Caco-2 (cell line): ENCODE measurements at regions of chrX and their contacts with region 1.

Region 1: DNA sequence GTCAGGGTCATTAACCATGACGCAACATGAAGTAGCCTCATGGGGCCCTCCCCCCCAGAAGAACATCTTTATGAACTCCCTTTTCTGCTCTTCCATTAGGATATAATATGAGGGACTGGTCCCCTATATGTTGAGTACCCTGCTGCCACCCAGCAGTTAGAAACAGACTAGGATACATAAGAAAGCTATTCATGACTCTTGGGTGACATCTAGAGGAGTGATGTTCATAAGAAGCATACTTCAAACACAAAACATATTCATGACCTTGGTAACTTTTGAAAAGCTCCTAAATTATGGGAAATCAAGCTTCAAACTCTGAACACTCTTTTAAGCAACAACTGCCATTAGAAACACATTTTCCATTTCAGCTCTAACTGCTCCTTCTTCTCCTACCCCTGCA is 155.2 kb upstream of the SPIN4 start:
- DNase-seq: peak in 1 of 2 experiments; percentile 24
- H3K4me3 ChIP-seq: no peak overlapping the region
- H3K4me3 Mint-ChIP-seq: no peak overlapping the region
- H3K27ac Mint-ChIP-seq: no peak overlapping the region
- H3K4me1 ChIP-seq: peaks cover 6% of the 10 kb centered on the region; the same call in 1 of the 2 replicates
- H3K4me1 Mint-ChIP-seq: peaks cover 7% of the 10 kb centered on the region
- H3K27me3 ChIP-seq: no peaks in the 10 kb centered on the region
- H3K27me3 Mint-ChIP-seq: no peaks in the 10 kb centered on the region
- CTCF ChIP-seq: peak; percentile 18 to 32

Region 2: DNA sequence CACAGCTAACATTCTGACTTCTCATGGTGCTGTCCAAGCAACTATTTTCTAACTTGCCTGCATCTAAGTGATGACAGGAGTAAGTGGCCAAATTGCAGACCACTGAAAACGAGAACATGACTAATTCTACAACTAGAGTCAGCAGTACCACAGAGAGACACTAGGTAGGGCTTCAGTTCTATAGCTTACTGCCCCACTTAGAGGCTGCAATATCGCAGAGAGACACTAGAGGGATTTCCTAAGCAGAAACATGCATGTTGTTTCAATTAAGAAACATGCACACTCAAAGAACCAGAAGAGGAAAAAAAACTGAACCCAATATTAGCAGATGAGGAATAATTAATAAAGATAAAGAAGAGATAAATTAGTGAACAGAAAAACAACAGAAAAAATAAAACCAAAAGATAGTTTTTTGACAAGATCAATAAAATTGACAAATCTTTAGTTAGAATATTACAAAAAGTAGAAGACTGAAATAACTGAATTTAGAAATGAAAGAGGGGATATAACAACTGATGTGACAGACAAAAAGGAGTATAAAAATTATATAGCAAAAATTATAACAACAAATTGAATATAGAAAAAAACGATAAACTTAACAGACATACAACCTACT is 256.0 kb before region 1 on chrX:
- CTCF ChIA-PET with region 1: interaction called, 12 read pairs
- POLR2A ChIA-PET with region 1: no interaction called
- intact Hi-C with region 1: no loop called
- DNase-seq: peak; percentile 57 to 69
- H3K4me3 ChIP-seq: no peak overlapping the region
- H3K4me3 Mint-ChIP-seq: no peak overlapping the region
- H3K27ac Mint-ChIP-seq: no peak overlapping the region
- H3K4me1 ChIP-seq: no peaks in the 10 kb centered on the region
- H3K4me1 Mint-ChIP-seq: no peaks in the 10 kb centered on the region
- H3K27me3 ChIP-seq: no peaks in the 10 kb centered on the region
- H3K27me3 Mint-ChIP-seq: no peaks in the 10 kb centered on the region
- CTCF ChIP-seq: peak; percentile 70 to 90

Region 3: GRCh38 chrX:63275127-63275526 is 231.2 kb before region 1 on chrX:
- CTCF ChIA-PET with region 1: no interaction called
- POLR2A ChIA-PET with region 1: no interaction called
- intact Hi-C with region 1: loop called (anchors 1 kb)
- DNase-seq: peak; percentile 28 to 49
- H3K4me3 ChIP-seq: no peak overlapping the region
- H3K4me3 Mint-ChIP-seq: no peak overlapping the region
- H3K27ac Mint-ChIP-seq: no peak overlapping the region
- H3K4me1 ChIP-seq: no peaks in the 10 kb centered on the region
- H3K4me1 Mint-ChIP-seq: no peaks in the 10 kb centered on the region
- H3K27me3 ChIP-seq: no peaks in the 10 kb centered on the region
- H3K27me3 Mint-ChIP-seq: no peaks in the 10 kb centered on the region
- CTCF ChIP-seq: peak; percentile 39 to 50

Region 4: DNA sequence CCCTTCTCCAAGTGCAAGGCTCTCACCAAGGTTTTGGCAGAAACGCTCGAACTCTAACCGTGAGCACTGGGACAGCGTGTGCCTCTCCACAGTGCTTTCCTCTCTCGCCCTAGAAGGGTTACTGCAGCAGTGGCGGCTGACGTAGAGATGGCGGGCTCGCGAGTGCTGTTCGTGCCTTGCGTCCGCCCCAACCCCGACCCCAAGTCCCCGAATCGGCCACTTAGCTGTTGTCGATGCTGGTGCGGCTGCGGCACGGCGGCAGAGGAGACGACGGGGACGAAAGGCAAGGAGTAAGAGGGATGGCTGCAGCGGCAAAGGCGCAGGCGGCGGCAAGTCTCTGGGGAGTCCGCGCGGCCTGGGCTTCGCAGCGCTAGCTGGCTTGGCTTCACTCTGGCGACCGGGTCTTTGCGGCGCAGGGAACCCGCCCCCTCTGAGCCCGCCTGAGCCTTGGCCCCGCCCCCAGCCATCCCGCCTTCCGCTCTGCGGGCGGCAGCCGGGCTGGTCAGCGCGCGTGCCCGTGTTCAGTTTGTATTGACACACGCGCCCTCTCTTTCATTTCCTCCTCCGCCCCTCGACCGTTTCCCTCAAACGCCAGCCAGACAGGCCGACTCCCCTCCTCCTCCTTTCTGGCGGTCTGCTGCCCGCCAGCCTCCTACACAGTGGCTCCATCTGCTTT is 155.2 kb before region 1 on chrX and contains the start of gene SPIN4:
- CTCF ChIA-PET with region 1: no interaction called
- POLR2A ChIA-PET with region 1: no interaction called
- intact Hi-C with region 1: loop called (anchors 2 kb)
- DNase-seq: peak; percentile 89
- H3K4me3 ChIP-seq: peak within 1 kb of the TSS; percentile 67
- H3K4me3 Mint-ChIP-seq: peak within 1 kb of the TSS; percentile 98
- H3K27ac Mint-ChIP-seq: peak within 1 kb of the TSS; percentile 89
- H3K4me1 ChIP-seq: no peaks in the 10 kb centered on the region
- H3K4me1 Mint-ChIP-seq: peaks cover 9% of the 10 kb centered on the region
- H3K27me3 ChIP-seq: no peaks in the 10 kb centered on the region
- H3K27me3 Mint-ChIP-seq: no peaks in the 10 kb centered on the region
- CTCF ChIP-seq: no peak
- total RNA-seq, gene SPIN4: 13.6 and 14.1 TPM in 2 replicates

Region 5: DNA sequence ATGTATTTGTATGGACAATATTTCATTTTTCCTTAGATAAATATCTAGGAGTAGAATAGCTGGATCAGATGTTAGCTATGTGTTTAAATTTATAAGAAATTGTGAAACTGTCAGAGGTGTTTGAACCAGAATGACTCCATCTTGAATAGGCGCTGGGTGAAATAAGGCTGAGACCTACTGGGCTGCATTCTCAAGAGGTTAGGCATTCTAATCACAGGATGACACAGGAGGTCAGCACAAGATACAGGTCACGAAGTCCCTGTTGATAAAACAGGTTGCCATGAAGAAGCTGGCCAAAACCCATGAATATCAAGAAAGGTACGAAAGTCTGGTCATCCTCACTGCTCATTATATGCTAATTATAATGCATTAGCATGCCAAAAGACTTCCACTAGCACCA is 118.9 kb before region 1 on chrX:
- CTCF ChIA-PET with region 1: no interaction called
- POLR2A ChIA-PET with region 1: no interaction called
- intact Hi-C with region 1: no loop called
- DNase-seq: no peak
- H3K4me3 ChIP-seq: no peak overlapping the region
- H3K4me3 Mint-ChIP-seq: no peak overlapping the region
- H3K27ac Mint-ChIP-seq: no peak overlapping the region
- H3K4me1 ChIP-seq: no peaks in the 10 kb centered on the region
- H3K4me1 Mint-ChIP-seq: no peaks in the 10 kb centered on the region
- H3K27me3 ChIP-seq: no peaks in the 10 kb centered on the region
- H3K27me3 Mint-ChIP-seq: no peaks in the 10 kb centered on the region
- CTCF ChIP-seq: no peak

Region 6: DNA sequence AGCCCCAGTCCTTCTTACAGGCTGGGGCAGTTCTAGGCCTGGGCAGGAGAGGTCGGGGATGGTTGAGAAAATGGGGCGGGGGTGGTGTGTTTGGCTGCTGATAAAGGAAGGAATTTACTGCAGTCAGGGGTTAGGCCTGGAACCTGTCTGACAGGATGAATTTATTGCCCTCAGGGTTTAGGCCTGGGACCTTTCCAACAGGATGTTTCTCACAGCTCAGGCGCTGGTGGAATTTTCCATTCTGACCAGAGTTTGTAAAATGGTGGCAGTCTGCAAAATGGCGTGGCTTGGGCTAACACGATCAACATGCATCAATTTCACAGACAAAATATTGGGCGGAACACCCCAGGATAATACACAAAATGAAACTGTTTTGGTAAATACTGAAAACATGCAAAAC is 71.7 kb before region 1 on chrX:
- CTCF ChIA-PET with region 1: no interaction called
- POLR2A ChIA-PET with region 1: no interaction called
- intact Hi-C with region 1: loop called (anchors 1 kb)
- DNase-seq: peak; percentile 78 to 86
- H3K4me3 ChIP-seq: no peak overlapping the region
- H3K4me3 Mint-ChIP-seq: peak overlapping the region; percentile 44
- H3K27ac Mint-ChIP-seq: peak overlapping the region; percentile 96
- H3K4me1 ChIP-seq: peaks cover 14% of the 10 kb centered on the region
- H3K4me1 Mint-ChIP-seq: peaks cover 11% of the 10 kb centered on the region
- H3K27me3 ChIP-seq: no peaks in the 10 kb centered on the region
- H3K27me3 Mint-ChIP-seq: no peaks in the 10 kb centered on the region
- CTCF ChIP-seq: no peak

Region 7: GRCh38 chrX:63686878-63687714 is 180.8 kb after region 1 on chrX:
- CTCF ChIA-PET with region 1: interaction called, 4 read pairs
- POLR2A ChIA-PET with region 1: no interaction called
- intact Hi-C with region 1: loop called (anchors 2 kb)
- DNase-seq: peak; percentile 18 to 28
- H3K4me3 ChIP-seq: no peak overlapping the region
- H3K4me3 Mint-ChIP-seq: no peak overlapping the region
- H3K27ac Mint-ChIP-seq: no peak overlapping the region
- H3K4me1 ChIP-seq: no peaks in the 10 kb centered on the region
- H3K4me1 Mint-ChIP-seq: no peaks in the 10 kb centered on the region
- H3K27me3 ChIP-seq: no peaks in the 10 kb centered on the region
- H3K27me3 Mint-ChIP-seq: no peaks in the 10 kb centered on the region
- CTCF ChIP-seq: peak; percentile 47 to 56